Posterior cingulate gyrus (tissue), 11 donors: ENCODE measurements at regions of chrX and their contacts with region 1.

Region 1: GRCh38 chrX:111445486-111445885 is 33.5 kb upstream of the DCX start:
- DNase-seq: no peak

Region 2: GRCh38 chrX:111168314-111168713 is 277.2 kb before region 1 on chrX:
- intact Hi-C with region 1: loop called (anchors 10 kb)
- DNase-seq: peak in 1 of 10 donors; percentile 2

Region 3: DNA sequence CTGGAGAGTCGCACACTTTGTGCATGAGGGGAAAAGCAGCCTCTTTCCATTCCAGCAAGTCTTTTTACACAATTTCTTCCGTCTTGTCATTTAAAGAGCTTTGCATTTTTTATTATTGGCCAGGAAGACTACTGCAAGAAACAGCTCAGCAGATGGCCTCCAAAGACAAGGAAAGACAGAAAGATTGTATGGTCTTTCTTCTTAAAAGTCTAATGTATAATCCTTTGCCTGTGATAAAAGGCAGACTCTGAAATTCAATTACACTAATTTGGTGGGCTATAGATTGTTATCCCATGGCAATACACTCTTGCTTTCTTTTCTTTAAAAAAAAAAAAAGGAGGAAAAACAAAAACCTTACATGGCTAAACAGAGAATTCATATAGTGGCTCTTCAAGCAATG is 181.1 kb before region 1 on chrX:
- intact Hi-C with region 1: loop called (anchors 2 kb)
- DNase-seq: no peak